ENCODE measurements at regions of chr22 and their contacts with region 1.

Region 1: GRCh38 chr22:18935889-18936529 is at the start of gene PRODH:
- DNase-seq: no peak
- H3K4me3 Mint-ChIP-seq: no peak within 1 kb of the TSS
- H3K27ac Mint-ChIP-seq: no peak within 1 kb of the TSS
- H3K4me1 Mint-ChIP-seq: no peaks in the 10 kb centered on the region
- H3K27me3 Mint-ChIP-seq: no peaks in the 10 kb centered on the region
- CTCF ChIP-seq: no peak
- total RNA-seq, gene PRODH: 6.0 and 8.4 TPM in 2 replicates

Region 2: DNA sequence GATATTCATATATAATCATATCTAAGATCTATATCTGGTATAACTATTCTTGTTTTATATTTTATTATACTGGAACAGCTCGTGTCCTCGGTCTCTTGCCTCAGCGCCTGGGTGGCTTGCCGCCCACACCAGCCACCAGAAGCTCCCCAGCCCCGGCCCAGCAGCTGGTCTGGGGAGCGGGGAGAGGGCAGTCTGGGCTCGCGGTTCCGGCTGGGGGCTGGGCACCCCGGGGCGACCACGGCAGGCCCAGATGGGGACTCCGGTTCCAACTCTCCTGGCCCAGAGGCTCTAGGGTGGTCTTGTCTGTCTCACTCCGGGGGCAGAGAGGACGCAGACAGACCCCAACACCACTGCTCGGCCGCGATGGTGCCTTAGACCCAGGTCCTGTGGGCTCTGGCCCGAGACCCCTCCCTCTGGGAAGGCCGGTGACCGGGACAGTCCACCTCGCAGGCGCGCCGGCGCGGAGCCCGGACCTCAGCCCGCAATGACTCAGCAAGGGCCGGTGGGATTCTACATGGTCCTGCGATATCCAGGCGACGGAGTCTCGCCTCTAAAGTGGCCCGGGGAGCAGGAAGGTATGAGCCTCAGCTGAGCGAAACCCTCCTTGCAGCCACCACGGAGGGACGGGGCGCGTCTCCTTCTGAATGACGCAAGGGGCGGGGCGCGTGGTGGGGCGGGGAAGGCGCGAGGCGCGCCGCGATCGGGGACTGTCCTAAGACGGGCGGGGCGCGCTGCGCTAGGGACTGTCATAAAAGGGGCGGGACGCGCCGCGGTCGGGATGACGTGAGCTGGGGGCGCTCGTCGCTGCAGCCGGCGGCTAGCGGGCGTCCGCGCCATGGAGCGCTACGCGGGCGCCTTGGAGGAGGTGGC is 30.2 kb before region 1 on chr22 and contains the start of gene DGCR6:
- CTCF ChIA-PET with region 1: interaction called, 5 read pairs
- POLR2A ChIA-PET with region 1: interaction called, 12 read pairs
- intact Hi-C with region 1: no loop called
- DNase-seq: no peak
- H3K4me3 Mint-ChIP-seq: no peak within 1 kb of the TSS
- H3K27ac Mint-ChIP-seq: no peak within 1 kb of the TSS
- H3K4me1 Mint-ChIP-seq: no peaks in the 10 kb centered on the region
- H3K27me3 Mint-ChIP-seq: no peaks in the 10 kb centered on the region
- CTCF ChIP-seq: no peak
- total RNA-seq, gene DGCR6: 1.6 and 1.7 TPM in 2 replicates

Measured in MCF 10A (cell line).